WTC11 (cell line): ENCODE measurements at regions of chr6 and their contacts with region 1.

Region 1: DNA sequence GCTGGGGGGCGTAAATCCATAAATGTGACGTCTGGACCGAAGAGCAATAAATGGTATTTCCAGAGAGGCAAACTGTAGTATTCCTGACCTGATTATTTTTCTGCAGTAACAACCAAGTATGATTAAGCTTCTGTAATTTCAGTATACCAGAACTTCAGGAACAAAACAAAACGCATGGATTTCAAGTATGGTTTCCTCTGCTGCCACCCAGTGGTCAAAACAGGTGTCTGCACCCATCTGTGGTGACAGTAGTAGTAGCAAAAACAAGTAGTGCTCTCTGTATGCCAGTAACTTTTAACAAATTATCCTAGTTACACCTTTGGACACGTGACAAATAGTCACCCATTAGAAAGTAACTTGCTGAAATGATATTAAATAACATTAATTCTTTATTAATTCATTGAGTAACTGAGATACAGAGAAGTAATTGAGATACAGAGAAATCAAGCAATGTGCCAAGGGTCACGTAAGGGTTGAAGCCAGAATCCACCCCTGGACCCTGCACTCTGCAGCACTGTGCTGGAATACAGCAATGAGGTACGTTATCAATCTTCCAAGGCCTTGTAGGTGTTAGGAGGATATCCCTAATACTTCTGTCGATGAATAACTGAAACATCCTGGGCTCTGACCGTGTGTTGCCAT is 7.9 kb downstream of the CALHM4 start:
- DNase-seq: peak; percentile 77
- ATAC-seq: peak; percentile 80
- H3K4me3 Mint-ChIP-seq: peak overlapping the region; percentile 34
- H3K27ac Mint-ChIP-seq: 0 out of 2 replicates have a peak overlapping the region, but pooled peaks have one; percentile 20
- H3K4me1 Mint-ChIP-seq: peaks cover 4% of the 10 kb centered on the region
- H3K27me3 Mint-ChIP-seq: no peaks in the 10 kb centered on the region
- CTCF ChIP-seq: peak; percentile 83

Region 2: DNA sequence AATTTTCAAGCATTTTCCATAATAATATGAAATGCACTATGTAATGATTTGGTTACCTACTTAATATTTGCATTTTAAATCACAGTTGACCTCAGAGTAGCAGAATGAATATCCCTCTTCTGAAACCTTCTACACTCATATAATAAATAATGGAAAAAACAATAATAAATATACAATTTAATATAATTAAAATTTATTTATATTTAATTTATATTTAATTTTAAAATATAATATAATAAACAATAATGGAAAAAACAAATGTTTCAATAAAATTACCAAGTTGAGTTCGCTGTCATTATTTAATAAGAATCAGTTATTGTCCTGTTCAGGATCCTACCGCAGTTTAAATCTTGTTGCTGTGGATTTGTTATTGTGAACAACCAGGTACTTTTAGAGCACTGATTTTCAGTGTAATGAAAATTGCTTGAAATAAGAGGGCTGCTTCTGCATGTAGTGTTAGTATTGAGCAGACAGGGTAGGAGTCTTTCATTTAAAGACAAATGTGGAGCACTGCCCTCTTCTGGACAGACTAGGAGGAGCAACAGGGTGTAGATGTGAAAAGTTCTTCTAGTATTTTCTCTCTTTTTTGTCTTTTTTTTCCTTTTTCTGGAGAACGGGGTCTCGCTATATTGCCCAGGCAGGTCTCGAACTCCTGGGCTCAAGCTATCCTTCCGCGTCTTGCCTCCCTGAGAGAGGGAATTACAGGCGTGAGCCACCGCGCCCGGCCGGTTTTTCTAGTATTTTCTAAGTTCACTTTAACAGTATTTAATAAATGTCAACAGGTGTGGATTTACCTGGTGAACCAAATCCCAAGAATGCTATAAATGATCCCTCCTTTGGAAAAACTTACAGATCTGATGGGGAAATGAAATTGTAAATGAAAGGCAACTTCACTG is 29.6 kb before region 1 on chr6:
- CTCF ChIA-PET with region 1: interaction called, 10 read pairs
- POLR2A ChIA-PET with region 1: no interaction called
- DNase-seq: peak; percentile 79
- ATAC-seq: peak; percentile 75
- H3K4me3 Mint-ChIP-seq: no peak overlapping the region
- H3K27ac Mint-ChIP-seq: no peak overlapping the region
- H3K4me1 Mint-ChIP-seq: peaks cover 49% of the 10 kb centered on the region
- H3K27me3 Mint-ChIP-seq: no peaks in the 10 kb centered on the region
- CTCF ChIP-seq: peak; percentile 55

Region 3: DNA sequence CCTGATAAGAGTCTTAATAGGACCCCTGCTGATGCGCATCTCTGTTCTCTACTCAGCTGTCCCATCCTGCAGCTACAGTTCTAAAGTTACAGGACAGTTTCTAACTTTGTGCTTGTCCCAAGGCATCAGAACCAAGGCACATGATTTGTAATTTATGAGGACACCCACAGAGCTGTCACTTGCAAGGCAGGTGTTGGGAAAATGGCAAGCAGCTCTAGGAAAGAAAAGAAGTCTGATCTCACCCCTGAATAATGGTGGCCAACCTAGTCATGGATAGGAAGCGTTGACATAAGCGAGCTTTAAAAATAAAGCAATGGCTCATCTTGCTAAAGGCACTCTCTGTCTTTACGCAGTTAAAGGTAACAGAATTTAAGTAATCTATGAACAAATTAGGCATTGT is 576.2 kb after region 1 on chr6:
- CTCF ChIA-PET with region 1: no interaction called
- POLR2A ChIA-PET with region 1: interaction called, 10 read pairs
- DNase-seq: no peak
- ATAC-seq: no peak
- H3K4me3 Mint-ChIP-seq: no peak overlapping the region
- H3K27ac Mint-ChIP-seq: no peak overlapping the region
- H3K4me1 Mint-ChIP-seq: peaks cover 14% of the 10 kb centered on the region
- H3K27me3 Mint-ChIP-seq: no peaks in the 10 kb centered on the region
- CTCF ChIP-seq: no peak